Posterior vena cava (tissue), 2 donors: ENCODE measurements at regions of chr20 and their contacts with region 1.

Region 1: DNA sequence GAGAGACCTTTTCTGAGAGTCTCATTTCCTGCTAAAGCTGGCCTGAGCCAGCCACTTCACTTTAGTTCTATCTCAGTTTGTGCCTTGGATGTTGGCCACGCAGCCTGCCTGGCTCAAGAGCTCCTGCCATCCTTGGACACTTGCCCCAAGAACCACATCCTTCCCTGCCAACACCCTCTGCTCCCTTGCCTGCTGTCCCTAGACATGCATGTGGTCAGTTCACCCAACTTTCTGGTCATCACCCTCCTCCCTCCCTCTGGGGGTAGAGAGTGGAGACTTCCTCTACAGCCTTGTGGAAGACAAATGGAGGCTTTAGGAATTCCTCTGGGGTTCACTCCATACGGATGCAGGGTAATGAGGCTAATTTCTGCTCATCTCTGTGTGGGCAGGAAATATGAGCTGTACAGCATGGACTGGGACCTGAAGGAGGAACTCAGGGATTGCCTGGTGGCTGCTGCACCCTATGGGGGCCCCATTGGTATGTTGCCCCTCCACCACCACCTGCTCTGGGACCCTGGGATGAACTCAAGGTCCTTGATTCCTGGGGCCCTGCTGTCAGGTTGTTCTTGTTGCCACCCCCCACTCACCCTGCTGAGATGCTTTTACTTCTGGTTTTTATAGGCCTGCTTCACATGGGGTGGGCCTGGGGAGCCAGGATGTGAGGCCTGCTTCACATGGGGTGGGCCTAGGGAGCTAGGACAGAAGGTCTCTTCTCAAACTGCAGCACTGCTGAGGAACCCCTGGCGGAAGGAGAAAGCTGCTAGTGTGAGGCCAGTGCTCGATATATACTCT is 13.8 kb upstream of the PTPRA start:
- DNase-seq: no peak

Region 2: GRCh38 chr20:2700913-2701620 is 158.5 kb before region 1 on chr20:
- intact Hi-C with region 1: loop called in 1 of 2 experiments (anchors 10 kb)
- DNase-seq: no peak